ENCODE measurements at regions of chr17 and their contacts with region 1.

Region 1: GRCh38 chr17:27244491-27245223 is 49.3 kb upstream of the WSB1 start:
- DNase-seq: peak; percentile 77
- ATAC-seq: peak; percentile 94

Region 2: DNA sequence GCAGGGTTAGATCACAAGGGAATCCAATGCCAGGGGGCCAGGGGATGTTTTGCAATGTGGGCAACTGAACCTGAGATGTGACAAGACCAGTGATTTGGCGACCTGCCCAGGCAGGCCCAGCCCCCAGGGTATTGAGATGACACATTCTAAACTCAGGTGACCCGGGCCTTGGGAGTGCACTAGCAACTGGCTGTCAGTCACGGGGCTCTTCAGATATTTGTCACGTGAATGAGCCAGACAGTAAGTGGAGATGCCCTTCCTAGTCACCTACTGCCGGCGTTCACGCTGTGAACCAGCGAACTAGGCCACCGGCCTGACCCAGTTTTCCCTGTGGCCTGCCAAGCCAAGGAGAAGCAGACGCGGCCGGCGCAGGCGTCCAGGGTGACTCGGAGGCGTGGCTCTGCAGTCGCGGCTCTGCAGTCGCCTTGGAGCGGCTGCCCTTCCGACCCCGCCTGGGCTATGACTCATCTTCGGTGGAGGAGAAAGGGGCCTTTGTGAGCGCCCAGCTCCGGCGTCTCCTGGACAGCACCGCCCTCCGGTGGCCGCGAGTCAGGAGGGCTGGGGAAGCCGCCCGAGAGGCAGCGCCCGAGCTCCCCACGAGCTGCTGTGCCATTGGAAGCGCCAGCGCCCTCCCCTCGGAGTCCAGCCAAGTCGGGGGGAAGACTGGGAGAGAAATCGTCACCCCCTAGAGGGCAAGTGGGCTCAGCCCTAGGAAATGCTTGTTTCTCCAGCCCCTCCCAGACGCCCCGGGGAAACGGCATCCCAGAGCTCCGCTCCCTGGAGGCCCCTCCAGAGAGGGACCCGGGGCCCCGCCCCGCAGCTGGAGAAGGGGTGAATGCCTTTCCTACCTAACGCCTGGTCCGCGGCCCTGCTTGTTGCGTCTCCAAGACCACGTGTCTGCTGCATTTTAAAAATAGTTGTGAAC is 88.1 kb after region 1 on chr17:
- intact Hi-C with region 1: loop called (anchors 5 kb)
- DNase-seq: peak; percentile 99
- ATAC-seq: peak; percentile 98

Measured in sciatic nerve (tissue), 2 donors.